ENCODE measurements at regions of chr2 and their contacts with region 1.

Region 1: DNA sequence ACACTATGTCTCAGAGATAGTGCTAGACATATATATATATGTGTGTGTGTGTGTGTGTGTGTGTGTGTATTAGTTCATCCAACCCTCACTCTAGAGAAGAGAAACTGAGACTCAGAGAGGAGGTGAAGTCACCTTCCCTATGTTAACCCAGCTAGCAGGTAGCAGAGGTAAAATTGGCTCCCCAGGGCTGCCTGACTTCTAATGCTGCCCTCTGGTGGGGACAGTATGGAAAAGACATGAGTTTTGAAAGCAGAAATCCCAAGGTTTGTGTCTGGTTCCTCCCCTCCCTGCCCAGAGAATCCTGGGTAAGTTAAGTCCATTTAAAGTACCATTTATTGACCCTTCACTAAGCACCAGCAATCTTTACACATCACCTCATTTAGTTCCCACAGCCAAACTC is 137.7 kb downstream of the THNSL2 start:
- DNase-seq: peak in 1 of 2 donors; percentile 6
- ATAC-seq: no peak
- H3K4me3 ChIP-seq: no peak overlapping the region
- H3K27ac ChIP-seq: no peak overlapping the region
- H3K4me1 ChIP-seq: no peaks in the 10 kb centered on the region
- H3K27me3 ChIP-seq: peaks cover 0 to 3% (median 0%) of the 10 kb centered on the region in 7 donors
- CTCF ChIP-seq: peak in 7 of 9 donors; percentile 23 to 50 (median 43)

Region 2: DNA sequence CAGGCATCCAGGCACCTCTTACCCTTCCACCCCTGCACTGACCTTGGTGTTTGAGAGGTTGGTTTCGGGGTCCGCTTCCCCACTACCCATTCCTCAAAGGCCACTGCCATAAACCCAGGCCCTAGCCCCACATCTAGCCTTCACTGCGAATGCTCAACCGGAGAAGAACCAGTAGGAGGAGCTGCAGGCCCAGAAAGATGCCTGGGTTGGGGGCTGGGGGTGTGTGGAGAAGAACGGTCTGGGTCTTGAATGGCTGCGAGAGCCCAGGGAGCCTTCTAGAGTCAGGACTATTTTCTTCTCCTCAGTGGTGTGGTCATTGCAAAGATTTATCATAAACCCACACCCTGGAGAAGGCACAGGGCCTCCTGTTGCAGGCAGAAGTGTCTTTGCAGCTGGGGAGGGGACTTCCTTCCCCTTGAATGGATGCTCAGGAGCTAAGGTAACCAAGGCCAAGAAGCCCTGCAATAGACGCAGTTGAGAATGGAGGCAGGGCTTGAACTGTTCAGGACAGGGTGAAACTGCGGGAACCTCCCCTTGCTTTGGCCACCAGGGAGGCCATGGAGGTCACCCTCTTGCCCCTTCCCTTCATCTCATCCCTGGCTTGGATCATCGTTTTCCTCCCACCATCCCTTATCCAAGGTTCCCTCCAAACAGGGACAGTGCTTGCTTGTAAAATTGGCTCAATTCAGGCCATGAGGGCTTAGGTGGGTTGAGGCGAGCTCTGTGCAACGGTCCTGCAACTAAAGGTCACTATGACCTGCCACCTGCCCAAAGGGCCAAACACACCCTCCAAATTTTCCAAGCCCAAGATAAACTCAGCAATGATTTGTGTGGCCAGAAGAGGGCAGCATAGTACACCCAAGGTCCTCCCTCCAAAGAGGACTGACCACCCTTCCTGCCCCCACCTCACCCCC is 116.8 kb before region 1 on chr2:
- intact Hi-C with region 1: loop called (anchors 2 to 10 kb)
- DNase-seq: no peak
- ATAC-seq: peak; percentile 13 to 50 (median 39)
- H3K4me3 ChIP-seq: no peak overlapping the region
- H3K27ac ChIP-seq: no peak overlapping the region
- H3K4me1 ChIP-seq: no peaks in the 10 kb centered on the region
- H3K27me3 ChIP-seq: peaks cover 0 to 17% (median 13%) of the 10 kb centered on the region in 7 donors
- CTCF ChIP-seq: peak; percentile 38 to 72 (median 63)

Measured in heart right ventricle (tissue), 16 donors.